Prostate gland (tissue), 2 donors: ENCODE measurements at regions of chr2 and their contacts with region 1.

Region 1: GRCh38 chr2:185208261-185208660 is 530.3 kb upstream of the FSIP2 start:
- DNase-seq: no peak
- H3K4me3 ChIP-seq: no peak overlapping the region
- H3K27ac ChIP-seq: no peak overlapping the region
- H3K4me1 ChIP-seq: no peaks in the 10 kb centered on the region
- H3K27me3 ChIP-seq: no peaks in the 10 kb centered on the region
- CTCF ChIP-seq: peak in 1 of 4 experiments; percentile 30
- POLR2A ChIP-seq: no peak

Region 2: DNA sequence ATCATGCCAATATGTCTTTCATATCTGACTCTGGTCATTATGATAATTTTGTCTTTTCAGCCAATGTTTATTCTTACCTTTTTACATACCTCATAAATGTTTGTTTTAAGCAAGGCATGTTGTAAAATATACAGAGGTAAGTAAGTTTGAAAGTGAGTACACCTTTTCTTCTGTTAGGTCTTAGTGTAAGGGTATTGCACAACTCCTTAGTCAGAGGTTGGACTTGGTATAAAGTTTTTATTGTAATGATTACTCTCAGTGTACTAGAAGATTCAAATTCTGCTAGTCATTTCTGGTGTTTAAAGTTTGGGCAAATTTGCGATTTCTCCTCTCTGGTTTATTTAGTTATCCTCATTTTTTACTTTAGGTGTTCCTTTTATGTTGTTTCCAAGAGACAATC is 33.9 kb before region 1 on chr2:
- intact Hi-C with region 1: no loop called
- DNase-seq: no peak
- H3K4me3 ChIP-seq: no peak overlapping the region
- H3K27ac ChIP-seq: no peak overlapping the region
- H3K4me1 ChIP-seq: no peaks in the 10 kb centered on the region
- H3K27me3 ChIP-seq: no peaks in the 10 kb centered on the region
- CTCF ChIP-seq: no peak
- POLR2A ChIP-seq: no peak

Region 3: GRCh38 chr2:185738679-185739472 is 530.6 kb after region 1 on chr2 and contains the start of gene FSIP2:
- intact Hi-C with region 1: loop called (anchors 5 kb)
- DNase-seq: peak; percentile 16
- H3K4me3 ChIP-seq: peak within 1 kb of the TSS in 1 of 2 donors; percentile 24
- H3K27ac ChIP-seq: no peak within 1 kb of the TSS
- H3K4me1 ChIP-seq: no peaks in the 10 kb centered on the region
- H3K27me3 ChIP-seq: no peaks in the 10 kb centered on the region
- CTCF ChIP-seq: peak; percentile 38 to 70 (median 60)
- POLR2A ChIP-seq: no peak
- total RNA-seq, gene FSIP2: 0.91 to 7.3 TPM